Esophagus squamous epithelium (tissue), 5 donors: ENCODE measurements at regions of chr2 and their contacts with region 1.

Region 1: GRCh38 chr2:176096986-176097819 is 2.4 kb upstream of the HOXD12 start:
- DNase-seq: no peak
- H3K4me3 ChIP-seq: peak overlapping the region; percentile 10 to 63 (median 34)
- H3K27ac ChIP-seq: no peak overlapping the region
- H3K4me1 ChIP-seq: peaks cover 26 to 59% (median 30%) of the 10 kb centered on the region in 3 donors
- H3K27me3 ChIP-seq: peaks cover 56 to 100% (median 84%) of the 10 kb centered on the region in 4 donors
- CTCF ChIP-seq: peak; percentile 54 to 86 (median 67)
- POLR2A ChIP-seq: no peak

Region 2: GRCh38 chr2:175684457-175684856 is 412.7 kb before region 1 on chr2:
- intact Hi-C with region 1: loop called (anchors 10 kb)
- DNase-seq: no peak
- H3K4me3 ChIP-seq: no peak overlapping the region
- H3K27ac ChIP-seq: no peak overlapping the region
- H3K4me1 ChIP-seq: no peaks in the 10 kb centered on the region
- H3K27me3 ChIP-seq: peaks cover 0 to 38% (median 0%) of the 10 kb centered on the region in 4 donors
- CTCF ChIP-seq: no peak
- POLR2A ChIP-seq: no peak